ENCODE measurements at regions of chr1 and their contacts with region 1.

Region 1: GRCh38 chr1:161071886-161072371 is 2.2 kb upstream of the ARHGAP30 start:
- DNase-seq: peak; percentile 18 to 50 (median 43)
- ATAC-seq: no peak
- H3K4me3 ChIP-seq: no peak overlapping the region
- H3K4me3 Mint-ChIP-seq: peak overlapping the region in 4 of 10 donors; percentile 11 to 46 (median 19)
- H3K27ac ChIP-seq: no peak overlapping the region
- H3K27ac Mint-ChIP-seq: peak overlapping the region; percentile 27 to 99 (median 91)
- H3K4me1 ChIP-seq: peaks cover 19 to 31% of the 10 kb centered on the region in 2 donors
- H3K4me1 Mint-ChIP-seq: peaks cover 21 to 47% (median 42%) of the 10 kb centered on the region in 7 donors
- H3K27me3 ChIP-seq: no peaks in the 10 kb centered on the region
- H3K27me3 Mint-ChIP-seq: no peaks in the 10 kb centered on the region

Region 2: GRCh38 chr1:160997323-160998038 is 74.4 kb before region 1 on chr1:
- CTCF ChIA-PET with region 1: interaction called, 5 read pairs
- POLR2A ChIA-PET with region 1: interaction called, 9 read pairs
- intact Hi-C with region 1: loop called in 1 of 2 experiments (anchors 1 kb)
- DNase-seq: peak in 8 of 9 donors; percentile 14 to 52 (median 44)
- ATAC-seq: peak; percentile 80
- H3K4me3 ChIP-seq: no peak overlapping the region
- H3K4me3 Mint-ChIP-seq: no peak overlapping the region
- H3K27ac ChIP-seq: no peak overlapping the region
- H3K27ac Mint-ChIP-seq: peak overlapping the region in 8 of 9 donors; percentile 3 to 74 (median 44)
- H3K4me1 ChIP-seq: no peaks in the 10 kb centered on the region
- H3K4me1 Mint-ChIP-seq: peaks cover 6 to 14% (median 11%) of the 10 kb centered on the region in 7 donors
- H3K27me3 ChIP-seq: no peaks in the 10 kb centered on the region
- H3K27me3 Mint-ChIP-seq: no peaks in the 10 kb centered on the region

Region 3: DNA sequence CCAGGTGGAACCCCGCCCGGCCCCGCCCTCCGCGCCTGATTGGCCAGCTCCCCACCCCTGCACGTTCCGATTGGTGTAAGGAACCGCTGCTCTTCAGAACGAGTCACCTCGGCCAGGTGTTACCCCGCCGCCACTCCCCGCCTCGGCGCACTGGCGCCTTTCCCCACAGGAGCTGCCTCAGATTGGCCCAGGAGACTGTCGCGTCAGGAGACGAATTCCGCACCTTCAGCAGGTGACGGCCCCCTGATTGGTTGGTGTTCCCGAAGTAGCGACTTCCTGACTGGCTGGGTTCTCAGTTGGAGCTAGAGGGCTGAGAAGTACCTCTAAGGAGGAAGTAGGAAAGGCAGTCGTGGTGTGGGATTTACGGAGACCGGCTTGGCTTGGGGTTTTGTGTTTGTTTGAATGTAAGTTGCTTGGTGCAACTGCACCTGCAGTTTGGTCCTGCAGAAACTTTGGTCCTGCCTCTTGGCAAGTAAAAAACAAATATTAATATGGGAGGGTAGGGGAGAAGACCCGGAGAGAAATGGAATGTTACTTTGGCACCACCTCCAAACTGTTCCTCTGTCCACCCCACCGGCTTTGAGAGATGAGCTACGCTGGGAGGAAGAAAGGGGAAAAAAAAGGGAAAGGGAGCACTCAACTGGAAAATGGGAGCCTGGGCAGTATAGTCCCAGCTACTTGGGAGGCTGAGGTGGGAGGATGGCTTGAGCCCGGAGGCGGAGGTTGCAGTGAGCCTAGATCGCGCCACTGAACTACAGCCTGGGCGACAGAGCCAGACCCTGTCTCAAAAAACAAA is 50.6 kb before region 1 on chr1:
- CTCF ChIA-PET with region 1: no interaction called
- POLR2A ChIA-PET with region 1: interaction called, 13 read pairs
- intact Hi-C with region 1: loop called (anchors 1 kb)
- DNase-seq: peak; percentile 72 to 97 (median 88)
- ATAC-seq: peak; percentile 98
- H3K4me3 ChIP-seq: peak overlapping the region; percentile 75
- H3K4me3 Mint-ChIP-seq: peak overlapping the region; percentile 87 to 97 (median 91)
- H3K27ac ChIP-seq: peak overlapping the region; percentile 72
- H3K27ac Mint-ChIP-seq: peak overlapping the region; percentile 79 to 96 (median 93)
- H3K4me1 ChIP-seq: peaks cover 11 to 17% of the 10 kb centered on the region in 2 donors
- H3K4me1 Mint-ChIP-seq: peaks cover 24 to 50% (median 48%) of the 10 kb centered on the region in 7 donors
- H3K27me3 ChIP-seq: no peaks in the 10 kb centered on the region
- H3K27me3 Mint-ChIP-seq: no peaks in the 10 kb centered on the region

Region 4: GRCh38 chr1:161045750-161046571 is 26.0 kb before region 1 on chr1 and contains the start of gene USF1:
- CTCF ChIA-PET with region 1: interaction called, 40 read pairs
- POLR2A ChIA-PET with region 1: interaction called, 377 read pairs
- intact Hi-C with region 1: loop called (anchors 1 kb)
- DNase-seq: peak; percentile 84 to 96 (median 93)
- ATAC-seq: peak; percentile 89
- H3K4me3 ChIP-seq: peak within 1 kb of the TSS; percentile 93
- H3K4me3 Mint-ChIP-seq: peak within 1 kb of the TSS; percentile 93 to 100 (median 97)
- H3K27ac ChIP-seq: peak within 1 kb of the TSS; percentile 92
- H3K27ac Mint-ChIP-seq: peak within 1 kb of the TSS; percentile 92 to 100 (median 99)
- H3K4me1 ChIP-seq: peaks cover 17 to 23% of the 10 kb centered on the region in 2 donors
- H3K4me1 Mint-ChIP-seq: peaks cover 41 to 54% (median 49%) of the 10 kb centered on the region in 7 donors
- H3K27me3 ChIP-seq: no peaks in the 10 kb centered on the region
- H3K27me3 Mint-ChIP-seq: no peaks in the 10 kb centered on the region
- total RNA-seq, gene USF1: 71.6 to 115 (median 91.7) TPM

Region 5: GRCh38 chr1:161098210-161099068 is 26.5 kb after region 1 on chr1 and contains the start of gene KLHDC9:
- CTCF ChIA-PET with region 1: interaction called, 120 read pairs
- POLR2A ChIA-PET with region 1: interaction called, 66 read pairs
- intact Hi-C with region 1: loop called (anchors 1 kb)
- DNase-seq: peak; percentile 29 to 68 (median 42)
- ATAC-seq: peak; percentile 57
- H3K4me3 ChIP-seq: peak within 1 kb of the TSS; percentile 81
- H3K4me3 Mint-ChIP-seq: peak within 1 kb of the TSS; percentile 81 to 94 (median 90)
- H3K27ac ChIP-seq: peak within 1 kb of the TSS; percentile 47
- H3K27ac Mint-ChIP-seq: peak within 1 kb of the TSS; percentile 87 to 100 (median 96)
- H3K4me1 ChIP-seq: peaks cover 9 to 11% of the 10 kb centered on the region in 2 donors
- H3K4me1 Mint-ChIP-seq: peaks cover 18 to 40% (median 23%) of the 10 kb centered on the region in 7 donors
- H3K27me3 ChIP-seq: no peaks in the 10 kb centered on the region
- H3K27me3 Mint-ChIP-seq: peaks cover 0 to 12% (median 0%) of the 10 kb centered on the region in 5 donors
- total RNA-seq, gene KLHDC9: 0.40 to 1.1 TPM in 2 of 5 experiments, not detected in the others

Region 6: GRCh38 chr1:161139765-161140164 is 67.8 kb after region 1 on chr1:
- CTCF ChIA-PET with region 1: interaction called, 8 read pairs
- POLR2A ChIA-PET with region 1: interaction called, 6 read pairs
- intact Hi-C with region 1: loop called in 1 of 2 experiments (anchors 1 kb)
- DNase-seq: peak in 5 of 9 donors; percentile 40 to 58 (median 50)
- ATAC-seq: peak; percentile 73
- H3K4me3 ChIP-seq: no peak overlapping the region
- H3K4me3 Mint-ChIP-seq: no peak overlapping the region
- H3K27ac ChIP-seq: no peak overlapping the region
- H3K27ac Mint-ChIP-seq: peak overlapping the region in 1 of 9 donors; percentile 54
- H3K4me1 ChIP-seq: no peaks in the 10 kb centered on the region
- H3K4me1 Mint-ChIP-seq: peaks cover 4 to 17% (median 10%) of the 10 kb centered on the region in 7 donors
- H3K27me3 ChIP-seq: no peaks in the 10 kb centered on the region
- H3K27me3 Mint-ChIP-seq: no peaks in the 10 kb centered on the region

Measured in naive thymus-derived CD4-positive, alpha-beta T cell (primary cell).